Activated B cell treated with CpG ODN at 0.5 μM for 24 hours (primary cell): ENCODE measurements at regions of chr16 and their contacts with region 1.

Region 1: GRCh38 chr16:31094424-31095120 is at the start of gene VKORC1:
- DNase-seq: peak; percentile 77
- ATAC-seq: peak; percentile 88
- H3K4me3 Mint-ChIP-seq: peak within 1 kb of the TSS; percentile 95
- H3K27ac Mint-ChIP-seq: peak within 1 kb of the TSS; percentile 93
- H3K4me1 Mint-ChIP-seq: peaks cover 25% of the 10 kb centered on the region
- H3K27me3 Mint-ChIP-seq: no peaks in the 10 kb centered on the region
- CTCF ChIP-seq: no peak
- total RNA-seq, gene VKORC1: 38.7 and 41.9 TPM in 2 replicates

Region 2: DNA sequence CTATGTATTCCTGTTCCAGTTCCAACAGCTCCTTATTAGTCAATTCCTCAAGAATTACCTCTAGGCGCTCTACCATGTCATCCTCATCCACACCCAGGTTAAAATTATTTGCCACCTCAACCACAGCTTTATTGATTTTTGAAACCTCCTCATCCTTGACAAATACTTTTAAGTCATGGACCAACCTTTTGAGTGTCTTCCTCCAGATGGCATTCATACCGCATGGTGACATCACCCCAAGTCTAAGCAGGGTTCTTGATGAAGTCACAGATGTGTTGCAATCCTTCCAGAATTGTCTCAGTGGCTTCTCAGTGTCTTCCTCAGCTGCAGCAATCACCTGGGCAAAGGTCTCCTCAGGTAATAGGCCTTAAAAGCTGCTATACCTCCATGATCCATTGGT is 240.8 kb before region 1 on chr16:
- CTCF ChIA-PET with region 1: no interaction called
- POLR2A ChIA-PET with region 1: no interaction called
- intact Hi-C with region 1: no loop called
- DNase-seq: no peak
- ATAC-seq: no peak
- H3K4me3 Mint-ChIP-seq: no peak overlapping the region
- H3K27ac Mint-ChIP-seq: no peak overlapping the region
- H3K4me1 Mint-ChIP-seq: no peaks in the 10 kb centered on the region
- H3K27me3 Mint-ChIP-seq: no peaks in the 10 kb centered on the region
- CTCF ChIP-seq: no peak

Region 3: GRCh38 chr16:30997000-30997886 is 97.3 kb before region 1 on chr16:
- CTCF ChIA-PET with region 1: no interaction called
- POLR2A ChIA-PET with region 1: no interaction called
- intact Hi-C with region 1: loop called (anchors 2 kb)
- DNase-seq: peak; percentile 68
- ATAC-seq: peak; percentile 99
- H3K4me3 Mint-ChIP-seq: peak overlapping the region; percentile 87
- H3K27ac Mint-ChIP-seq: peak overlapping the region; percentile 76
- H3K4me1 Mint-ChIP-seq: peaks cover 12% of the 10 kb centered on the region
- H3K27me3 Mint-ChIP-seq: no peaks in the 10 kb centered on the region
- CTCF ChIP-seq: no peak

Region 4: GRCh38 chr16:31032736-31033708 is 61.5 kb before region 1 on chr16 and contains the start of gene STX4:
- CTCF ChIA-PET with region 1: no interaction called
- POLR2A ChIA-PET with region 1: no interaction called
- intact Hi-C with region 1: loop called (anchors 1 kb)
- DNase-seq: peak; percentile 95
- ATAC-seq: peak; percentile 78
- H3K4me3 Mint-ChIP-seq: peak within 1 kb of the TSS; percentile 97
- H3K27ac Mint-ChIP-seq: peak within 1 kb of the TSS; percentile 94
- H3K4me1 Mint-ChIP-seq: peaks cover 17% of the 10 kb centered on the region
- H3K27me3 Mint-ChIP-seq: no peaks in the 10 kb centered on the region
- CTCF ChIP-seq: no peak
- total RNA-seq, gene STX4: 106 and 107 TPM in 2 replicates

Region 5: DNA sequence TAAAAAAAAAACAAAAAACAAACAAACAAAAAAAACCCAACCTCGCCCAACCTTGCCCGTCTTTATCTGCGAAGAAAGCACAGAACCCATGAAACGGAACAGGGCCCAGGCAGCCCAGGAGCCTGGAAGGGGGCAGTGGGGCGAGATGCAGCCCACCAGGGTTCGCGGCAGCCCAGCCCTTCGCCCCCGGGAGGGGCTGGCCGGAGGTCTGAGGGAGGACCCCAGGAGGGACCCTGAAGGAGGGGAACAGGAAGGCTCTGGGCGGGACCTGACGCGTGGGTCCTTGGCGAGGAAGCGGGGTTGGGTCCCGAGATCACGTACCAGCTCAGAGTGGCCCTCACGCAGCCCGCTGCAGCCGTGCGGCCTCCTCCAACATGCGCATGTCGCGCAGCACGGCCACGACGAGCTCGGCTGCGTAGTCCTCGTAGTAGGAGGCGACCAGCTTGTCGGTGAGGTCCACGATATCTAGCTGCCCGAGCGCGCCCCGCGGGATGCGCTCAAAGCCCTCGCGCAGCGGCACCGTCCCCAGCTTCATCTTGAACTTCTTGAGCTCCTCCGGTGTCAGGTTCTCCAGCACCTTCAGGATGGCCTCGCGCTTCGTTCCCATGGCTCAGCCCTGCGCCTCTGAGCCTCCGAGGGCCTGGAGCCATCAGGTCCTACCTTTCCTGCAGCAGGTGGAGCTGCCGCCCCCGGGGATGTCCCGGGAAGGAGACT is 122.0 kb after region 1 on chr16 and contains the start of gene PYDC1:
- CTCF ChIA-PET with region 1: no interaction called
- POLR2A ChIA-PET with region 1: no interaction called
- intact Hi-C with region 1: no loop called
- DNase-seq: peak; percentile 29
- ATAC-seq: no peak
- H3K4me3 Mint-ChIP-seq: peak within 1 kb of the TSS; percentile 83
- H3K27ac Mint-ChIP-seq: no peak within 1 kb of the TSS
- H3K4me1 Mint-ChIP-seq: peaks cover 48% of the 10 kb centered on the region
- H3K27me3 Mint-ChIP-seq: peaks cover 29% of the 10 kb centered on the region
- CTCF ChIP-seq: no peak
- total RNA-seq, gene PYDC1: 0.27 TPM in 1 of 2 replicates, not detected in the other

Region 6: DNA sequence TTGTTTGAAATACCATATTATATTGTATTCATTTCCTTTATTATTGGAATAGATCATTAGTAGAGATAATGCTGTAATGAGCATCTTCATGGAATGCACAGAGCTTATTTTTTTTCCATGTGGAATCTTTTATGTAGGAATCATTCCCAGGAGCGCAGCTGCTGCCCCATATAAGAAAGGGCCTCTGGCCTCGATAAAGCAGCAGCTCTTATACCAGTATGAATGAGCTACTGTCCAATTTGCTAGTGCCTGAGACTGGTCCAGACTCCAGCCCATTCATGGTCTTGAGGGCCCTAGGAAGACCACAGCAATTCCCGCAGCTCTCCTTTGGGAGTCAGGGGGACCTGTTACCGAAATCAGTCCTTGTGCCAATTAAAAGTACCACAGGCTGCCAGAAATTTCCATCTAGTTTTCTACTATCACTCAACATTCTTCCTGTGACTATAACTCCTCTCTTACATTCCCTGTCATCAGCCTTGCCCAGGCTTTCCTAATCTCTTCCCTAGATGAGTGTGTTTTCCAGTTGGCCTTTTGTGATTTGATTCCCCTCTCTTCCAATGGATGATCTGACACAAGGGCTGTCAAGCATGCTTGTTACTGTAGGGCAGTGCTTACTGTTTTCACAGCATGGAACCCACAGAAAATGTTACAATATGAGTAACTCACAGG is 346.1 kb after region 1 on chr16:
- CTCF ChIA-PET with region 1: no interaction called
- POLR2A ChIA-PET with region 1: no interaction called
- intact Hi-C with region 1: loop called (anchors 1 kb)
- DNase-seq: no peak
- ATAC-seq: no peak
- H3K4me3 Mint-ChIP-seq: peak overlapping the region; percentile 24
- H3K27ac Mint-ChIP-seq: no peak overlapping the region
- H3K4me1 Mint-ChIP-seq: peaks cover 19% of the 10 kb centered on the region
- H3K27me3 Mint-ChIP-seq: peaks cover 2% of the 10 kb centered on the region
- CTCF ChIP-seq: no peak